ENCODE measurements at regions of chr10 and their contacts with region 1.

Region 1: GRCh38 chr10:110547139-110547761 is 20.2 kb upstream of the SMC3 start:
- DNase-seq: no peak
- ATAC-seq: peak; percentile 89
- H3K4me3 ChIP-seq: no peak overlapping the region
- H3K27ac ChIP-seq: no peak overlapping the region
- H3K4me1 ChIP-seq: peaks cover 5% of the 10 kb centered on the region; the same call in 1 of the 2 replicates
- H3K27me3 ChIP-seq: peaks cover 0 to 2% of the 10 kb centered on the region in 2 experiments; a peak in 1 of 4 replicates
- CTCF ChIP-seq: peak; percentile 72 to 83 (median 73)
- EP300 ChIP-seq: no peak
- POLR2A ChIP-seq: no peak
- RAD21 ChIP-seq: peak; percentile 95

Region 2: DNA sequence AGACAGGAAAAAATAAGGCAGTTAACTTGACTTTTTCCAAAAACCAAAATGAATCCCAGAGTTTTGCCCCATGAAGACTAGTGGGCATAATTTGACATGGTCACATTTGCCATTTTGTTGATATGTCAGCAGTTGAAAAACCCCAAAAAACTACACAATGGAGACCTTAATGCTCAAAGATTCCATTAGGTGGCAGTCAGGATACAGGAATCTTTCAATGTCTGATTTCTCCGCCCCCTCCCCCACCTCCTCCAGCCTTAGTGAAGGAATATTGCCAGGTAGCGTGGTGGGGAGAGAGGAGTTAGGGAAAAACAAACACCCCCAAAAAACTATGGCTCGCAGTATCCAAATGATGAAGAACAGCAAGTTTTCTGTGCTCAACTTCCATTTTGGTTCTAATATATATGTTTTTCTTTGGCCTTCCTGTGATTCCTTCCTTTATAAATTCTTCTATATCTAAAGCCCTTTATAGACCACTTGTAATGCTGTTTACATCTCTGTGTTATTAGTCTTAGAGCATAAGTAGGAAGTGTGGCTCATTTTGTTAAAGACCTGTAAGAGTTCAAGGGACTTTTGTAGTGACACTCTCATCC is 235.8 kb before region 1 on chr10:
- CTCF ChIA-PET with region 1: interaction called, 191 read pairs
- POLR2A ChIA-PET with region 1: interaction called, 7 read pairs
- RAD21 ChIA-PET with region 1: interaction called, 151 read pairs
- SMC1A ChIA-PET with region 1: interaction called, 69 read pairs
- in situ Hi-C with region 1: loop called (anchors 5 kb)
- intact Hi-C with region 1: loop called (anchors 1 kb)
- DNase-seq: peak; percentile 47
- ATAC-seq: peak; percentile 83
- H3K4me3 ChIP-seq: no peak overlapping the region
- H3K27ac ChIP-seq: no peak overlapping the region
- H3K4me1 ChIP-seq: 0 out of 2 replicates have a peak, but pooled peaks cover 2% of the 10 kb centered on the region
- H3K27me3 ChIP-seq: no peaks in the 10 kb centered on the region
- CTCF ChIP-seq: peak; percentile 62 to 76 (median 68); a peak in 5 of 6 replicates
- EP300 ChIP-seq: no peak
- POLR2A ChIP-seq: no peak
- RAD21 ChIP-seq: peak; percentile 96

Region 3: GRCh38 chr10:110326351-110327032 is 220.8 kb before region 1 on chr10:
- CTCF ChIA-PET with region 1: interaction called, 29 read pairs
- POLR2A ChIA-PET with region 1: interaction called, 4 read pairs
- RAD21 ChIA-PET with region 1: interaction called, 16 read pairs
- SMC1A ChIA-PET with region 1: interaction called, 17 read pairs
- in situ Hi-C with region 1: no loop called
- intact Hi-C with region 1: no loop called
- DNase-seq: peak; percentile 51
- ATAC-seq: peak; percentile 49
- H3K4me3 ChIP-seq: no peak overlapping the region
- H3K27ac ChIP-seq: peak overlapping the region; percentile 79
- H3K4me1 ChIP-seq: peaks cover 39% of the 10 kb centered on the region
- H3K27me3 ChIP-seq: no peaks in the 10 kb centered on the region
- CTCF ChIP-seq: no peak
- EP300 ChIP-seq: peak in 1 of 2 experiments; percentile 60; a peak in 1 of 4 replicates
- POLR2A ChIP-seq: no peak
- RAD21 ChIP-seq: no peak

Region 4: GRCh38 chr10:110512461-110513187 is 34.6 kb before region 1 on chr10:
- CTCF ChIA-PET with region 1: interaction called, 6 read pairs
- POLR2A ChIA-PET with region 1: interaction called, 4 read pairs
- RAD21 ChIA-PET with region 1: interaction called, 23 read pairs
- SMC1A ChIA-PET with region 1: interaction called, 9 read pairs
- in situ Hi-C with region 1: no loop called
- intact Hi-C with region 1: no loop called
- DNase-seq: no peak
- ATAC-seq: peak; percentile 21
- H3K4me3 ChIP-seq: no peak overlapping the region
- H3K27ac ChIP-seq: no peak overlapping the region
- H3K4me1 ChIP-seq: no peaks in the 10 kb centered on the region
- H3K27me3 ChIP-seq: no peaks in the 10 kb centered on the region
- CTCF ChIP-seq: no peak
- EP300 ChIP-seq: no peak
- POLR2A ChIP-seq: peak; percentile 61
- RAD21 ChIP-seq: no peak

Region 5: DNA sequence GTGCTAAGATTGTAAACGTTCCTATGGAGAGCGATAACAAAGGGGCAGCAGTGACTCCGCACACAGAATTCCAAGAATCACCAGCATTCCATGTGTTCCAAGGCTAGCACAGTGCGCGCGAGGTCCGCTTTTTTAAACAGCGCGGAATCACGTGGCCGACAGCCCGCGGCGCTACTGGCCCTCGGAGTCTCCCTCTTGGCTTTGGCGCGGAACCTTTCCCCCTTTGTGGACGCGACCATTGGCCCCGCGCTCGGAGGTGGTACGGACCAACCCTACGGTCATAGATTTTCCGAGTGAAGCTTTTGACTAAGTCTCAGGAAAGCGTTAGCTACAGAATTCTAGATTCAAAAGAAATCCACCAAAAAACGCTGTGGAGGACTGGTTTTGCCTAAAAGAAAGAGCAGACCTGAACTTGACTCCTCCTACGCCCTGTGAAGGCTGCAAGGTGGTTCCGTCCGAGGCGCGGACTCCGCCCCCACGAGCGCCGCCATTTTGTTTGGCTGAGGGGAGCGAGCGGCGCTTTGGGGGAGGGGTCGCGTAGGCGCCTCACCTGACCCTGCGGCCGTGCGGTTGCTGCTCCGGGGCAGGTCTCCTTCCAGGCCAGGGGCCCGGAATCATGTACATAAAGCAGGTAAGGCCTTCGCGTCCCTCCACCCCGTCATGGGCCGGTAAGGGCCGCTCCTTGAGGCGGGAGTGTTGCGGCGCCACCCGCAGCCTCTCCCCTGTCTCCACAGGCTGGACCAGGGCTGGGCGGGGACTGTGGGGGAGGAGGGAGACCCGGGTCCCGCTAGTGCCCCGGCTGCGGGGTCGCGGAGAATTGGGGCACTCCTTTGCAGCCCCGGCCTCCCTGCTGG is 20.2 kb after region 1 on chr10 and contains the start of gene SMC3:
- CTCF ChIA-PET with region 1: interaction called, 24 read pairs
- POLR2A ChIA-PET with region 1: interaction called, 3 read pairs
- RAD21 ChIA-PET with region 1: interaction called, 5 read pairs
- SMC1A ChIA-PET with region 1: interaction called, 17 read pairs
- in situ Hi-C with region 1: no loop called
- intact Hi-C with region 1: no loop called
- DNase-seq: peak; percentile 85
- ATAC-seq: peak; percentile 88
- H3K4me3 ChIP-seq: peak within 1 kb of the TSS; percentile 70
- H3K27ac ChIP-seq: peak within 1 kb of the TSS; percentile 88
- H3K4me1 ChIP-seq: peaks cover 9% of the 10 kb centered on the region
- H3K27me3 ChIP-seq: no peaks in the 10 kb centered on the region
- CTCF ChIP-seq: no peak
- EP300 ChIP-seq: peak in 1 of 2 experiments; percentile 67; a peak in 1 of 4 replicates
- POLR2A ChIP-seq: peak; percentile 88
- RAD21 ChIP-seq: no peak
- polyA plus RNA-seq, gene SMC3: 31.0 to 43.0 TPM

Region 6: GRCh38 chr10:110634527-110635209 is 87.4 kb after region 1 on chr10:
- CTCF ChIA-PET with region 1: no interaction called
- POLR2A ChIA-PET with region 1: no interaction called
- RAD21 ChIA-PET with region 1: no interaction called
- SMC1A ChIA-PET with region 1: no interaction called
- in situ Hi-C with region 1: no loop called
- intact Hi-C with region 1: no loop called
- DNase-seq: no peak
- ATAC-seq: no peak
- H3K4me3 ChIP-seq: no peak overlapping the region
- H3K27ac ChIP-seq: no peak overlapping the region
- H3K4me1 ChIP-seq: no peaks in the 10 kb centered on the region
- H3K27me3 ChIP-seq: no peaks in the 10 kb centered on the region
- CTCF ChIP-seq: no peak
- EP300 ChIP-seq: no peak
- POLR2A ChIP-seq: no peak
- RAD21 ChIP-seq: no peak

Measured in GM12878 (cell line).